ENCODE measurements at regions of chr3 and their contacts with region 1.

Region 1: DNA sequence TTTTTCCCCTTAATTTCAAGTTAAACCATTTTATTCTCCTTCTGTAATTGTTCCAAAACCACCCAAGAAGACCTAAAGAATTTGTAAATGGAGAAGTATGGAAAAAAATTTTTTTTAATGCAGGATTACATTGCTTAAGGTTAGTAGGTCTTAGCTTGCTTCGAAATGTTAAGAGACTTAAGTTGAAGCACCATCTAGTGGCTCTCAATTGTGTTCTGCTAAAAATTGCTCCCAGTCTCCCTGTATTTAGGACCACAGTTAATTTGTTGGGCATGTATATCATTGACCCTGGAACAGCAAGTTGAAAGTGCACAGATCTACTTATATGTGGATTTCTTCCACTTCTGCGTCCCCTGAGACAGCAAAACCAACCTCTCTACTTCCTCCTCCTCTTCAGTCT is 32.4 kb downstream of the CD200R1L start:
- DNase-seq: peak in 1 of 2 experiments; percentile 12
- H3K4me3 ChIP-seq: no peak overlapping the region
- H3K4me3 Mint-ChIP-seq: no peak overlapping the region
- H3K27ac Mint-ChIP-seq: no peak overlapping the region
- H3K4me1 ChIP-seq: no peaks in the 10 kb centered on the region
- H3K4me1 Mint-ChIP-seq: no peaks in the 10 kb centered on the region
- H3K27me3 ChIP-seq: no peaks in the 10 kb centered on the region
- H3K27me3 Mint-ChIP-seq: no peaks in the 10 kb centered on the region
- CTCF ChIP-seq: peak; percentile 28 to 48

Region 2: DNA sequence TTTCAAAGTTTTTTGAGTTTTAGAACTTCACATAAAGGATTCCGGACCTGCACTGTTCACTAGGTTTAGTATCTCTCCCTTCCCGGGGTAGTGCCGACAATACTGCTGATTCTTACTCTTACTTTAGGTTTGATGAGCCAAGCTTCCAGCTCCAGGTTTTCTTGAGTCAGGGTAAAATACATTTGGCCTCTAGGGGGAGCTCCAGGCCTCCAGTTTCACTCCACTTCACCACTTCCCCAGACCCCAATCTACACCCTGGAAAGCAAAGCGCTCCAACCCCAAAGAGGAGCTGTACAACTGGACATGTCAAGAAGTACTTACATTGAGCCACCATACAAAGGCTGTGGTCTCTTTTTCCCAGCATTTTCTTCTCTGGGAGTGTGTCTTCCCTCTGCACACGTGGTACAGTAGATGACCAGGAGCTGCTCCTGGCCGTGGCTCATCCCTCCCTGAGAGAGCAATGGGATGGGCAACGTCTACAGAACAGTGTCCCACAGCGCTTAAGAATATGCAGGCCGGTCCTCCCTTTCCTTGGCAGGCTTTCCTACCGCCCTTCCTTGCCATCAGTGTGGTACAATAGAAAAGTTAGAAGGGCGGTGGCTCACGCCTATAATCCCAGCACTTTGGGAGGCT is 79.4 kb before region 1 on chr3:
- CTCF ChIA-PET with region 1: interaction called, 35 read pairs
- POLR2A ChIA-PET with region 1: no interaction called
- intact Hi-C with region 1: loop called (anchors 1 kb)
- DNase-seq: peak; percentile 67 to 76
- H3K4me3 ChIP-seq: no peak overlapping the region
- H3K4me3 Mint-ChIP-seq: no peak overlapping the region
- H3K27ac Mint-ChIP-seq: no peak overlapping the region
- H3K4me1 ChIP-seq: peaks cover 19% of the 10 kb centered on the region
- H3K4me1 Mint-ChIP-seq: peaks cover 18% of the 10 kb centered on the region
- H3K27me3 ChIP-seq: no peaks in the 10 kb centered on the region
- H3K27me3 Mint-ChIP-seq: no peaks in the 10 kb centered on the region
- CTCF ChIP-seq: peak; percentile 63 to 81

Region 3: DNA sequence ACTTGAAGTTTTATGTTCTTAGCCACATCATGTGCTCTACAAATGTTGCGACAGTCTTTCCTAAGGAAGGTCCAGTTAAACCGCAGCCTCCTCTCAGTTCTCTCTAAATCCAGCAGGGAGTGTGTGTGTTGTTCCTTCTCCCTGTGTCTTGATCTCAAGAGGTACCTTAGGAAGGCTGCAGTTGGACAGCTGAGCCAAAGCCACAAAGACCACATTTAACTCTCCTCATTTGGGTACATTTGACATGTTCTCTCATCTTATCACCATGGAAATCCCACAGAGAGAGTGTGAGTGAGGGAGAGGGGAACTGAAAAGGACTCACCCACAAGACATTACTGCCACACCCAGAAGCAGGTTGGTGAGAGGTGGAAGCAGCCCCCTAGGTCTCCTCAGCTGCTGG is 47.1 kb before region 1 on chr3:
- CTCF ChIA-PET with region 1: no interaction called
- POLR2A ChIA-PET with region 1: no interaction called
- intact Hi-C with region 1: no loop called
- DNase-seq: no peak
- H3K4me3 ChIP-seq: no peak overlapping the region
- H3K4me3 Mint-ChIP-seq: no peak overlapping the region
- H3K27ac Mint-ChIP-seq: no peak overlapping the region
- H3K4me1 ChIP-seq: peaks cover 9% of the 10 kb centered on the region; the same call in 1 of the 2 replicates
- H3K4me1 Mint-ChIP-seq: no peaks in the 10 kb centered on the region
- H3K27me3 ChIP-seq: no peaks in the 10 kb centered on the region
- H3K27me3 Mint-ChIP-seq: no peaks in the 10 kb centered on the region
- CTCF ChIP-seq: no peak

Region 4: DNA sequence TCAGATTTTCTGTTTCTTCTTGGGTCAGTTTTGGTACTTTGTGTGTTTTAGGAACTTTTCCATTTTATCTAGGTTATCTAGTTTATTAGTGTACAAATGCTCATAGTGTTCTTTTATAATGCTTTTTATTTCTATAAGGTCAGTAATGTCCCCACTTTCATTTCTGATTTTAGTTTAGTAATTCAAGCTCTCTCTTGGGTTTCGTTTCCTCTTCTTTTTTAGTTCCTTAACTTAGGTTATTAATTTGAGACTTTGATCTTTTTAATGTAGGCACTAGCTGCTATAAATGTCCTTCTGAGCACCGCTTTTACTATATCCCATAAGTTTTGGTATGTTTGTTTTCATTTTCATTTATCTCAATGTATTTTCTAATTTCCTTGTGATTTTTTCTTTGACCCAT is 59.4 kb after region 1 on chr3:
- CTCF ChIA-PET with region 1: no interaction called
- POLR2A ChIA-PET with region 1: no interaction called
- intact Hi-C with region 1: no loop called
- DNase-seq: no peak
- H3K4me3 ChIP-seq: no peak overlapping the region
- H3K4me3 Mint-ChIP-seq: no peak overlapping the region
- H3K27ac Mint-ChIP-seq: no peak overlapping the region
- H3K4me1 ChIP-seq: no peaks in the 10 kb centered on the region
- H3K4me1 Mint-ChIP-seq: peaks cover 5% of the 10 kb centered on the region
- H3K27me3 ChIP-seq: no peaks in the 10 kb centered on the region
- H3K27me3 Mint-ChIP-seq: no peaks in the 10 kb centered on the region
- CTCF ChIP-seq: no peak

Region 5: DNA sequence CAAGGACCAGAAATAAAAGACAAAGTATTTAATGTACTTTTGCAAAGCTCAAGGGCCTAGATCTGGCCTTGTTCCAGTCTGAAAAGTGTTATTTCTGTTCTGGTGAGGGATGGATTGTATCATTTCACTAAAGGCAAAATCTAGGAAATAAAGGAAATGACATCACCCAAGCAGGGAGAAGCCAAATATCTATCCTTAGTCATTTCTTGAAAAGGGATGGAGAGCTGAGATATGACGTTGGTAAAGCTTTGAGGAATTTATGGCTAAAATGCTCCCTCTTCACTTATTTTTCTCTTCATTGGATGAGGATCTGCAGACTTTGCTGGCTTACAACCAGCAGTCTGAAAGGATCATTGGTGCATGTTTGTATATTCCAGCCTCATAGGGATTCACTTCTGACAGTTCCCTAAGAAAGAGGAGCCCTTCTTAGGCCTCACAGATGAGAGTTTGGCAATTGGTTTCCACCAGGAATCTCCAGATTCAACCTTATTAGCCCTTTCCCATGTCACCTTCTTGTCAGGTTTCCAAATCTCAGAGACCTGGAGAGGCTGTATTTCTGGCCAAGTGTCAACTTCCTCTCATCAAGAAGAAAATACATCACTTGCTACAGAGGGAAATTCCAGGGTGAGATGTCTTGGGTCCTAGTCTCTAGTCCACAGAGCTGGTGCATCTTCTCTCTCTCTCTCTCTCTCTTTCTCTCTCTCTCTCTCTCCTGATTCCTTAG is 303.4 kb after region 1 on chr3:
- CTCF ChIA-PET with region 1: no interaction called
- POLR2A ChIA-PET with region 1: no interaction called
- intact Hi-C with region 1: no loop called
- DNase-seq: no peak
- H3K4me3 ChIP-seq: no peak overlapping the region
- H3K4me3 Mint-ChIP-seq: no peak overlapping the region
- H3K27ac Mint-ChIP-seq: no peak overlapping the region
- H3K4me1 ChIP-seq: no peaks in the 10 kb centered on the region
- H3K4me1 Mint-ChIP-seq: no peaks in the 10 kb centered on the region
- H3K27me3 ChIP-seq: no peaks in the 10 kb centered on the region
- H3K27me3 Mint-ChIP-seq: peaks cover 2% of the 10 kb centered on the region
- CTCF ChIP-seq: no peak

Measured in Caco-2 (cell line).